ENCODE measurements at regions of chr1 and their contacts with region 1.

Region 1: GRCh38 chr1:64675718-64676345 is 69.0 kb upstream of the RAVER2 start:
- DNase-seq: no peak
- H3K4me3 Mint-ChIP-seq: no peak overlapping the region
- H3K27ac Mint-ChIP-seq: no peak overlapping the region
- H3K4me1 Mint-ChIP-seq: no peaks in the 10 kb centered on the region
- H3K27me3 Mint-ChIP-seq: peaks cover 2% of the 10 kb centered on the region

Region 2: DNA sequence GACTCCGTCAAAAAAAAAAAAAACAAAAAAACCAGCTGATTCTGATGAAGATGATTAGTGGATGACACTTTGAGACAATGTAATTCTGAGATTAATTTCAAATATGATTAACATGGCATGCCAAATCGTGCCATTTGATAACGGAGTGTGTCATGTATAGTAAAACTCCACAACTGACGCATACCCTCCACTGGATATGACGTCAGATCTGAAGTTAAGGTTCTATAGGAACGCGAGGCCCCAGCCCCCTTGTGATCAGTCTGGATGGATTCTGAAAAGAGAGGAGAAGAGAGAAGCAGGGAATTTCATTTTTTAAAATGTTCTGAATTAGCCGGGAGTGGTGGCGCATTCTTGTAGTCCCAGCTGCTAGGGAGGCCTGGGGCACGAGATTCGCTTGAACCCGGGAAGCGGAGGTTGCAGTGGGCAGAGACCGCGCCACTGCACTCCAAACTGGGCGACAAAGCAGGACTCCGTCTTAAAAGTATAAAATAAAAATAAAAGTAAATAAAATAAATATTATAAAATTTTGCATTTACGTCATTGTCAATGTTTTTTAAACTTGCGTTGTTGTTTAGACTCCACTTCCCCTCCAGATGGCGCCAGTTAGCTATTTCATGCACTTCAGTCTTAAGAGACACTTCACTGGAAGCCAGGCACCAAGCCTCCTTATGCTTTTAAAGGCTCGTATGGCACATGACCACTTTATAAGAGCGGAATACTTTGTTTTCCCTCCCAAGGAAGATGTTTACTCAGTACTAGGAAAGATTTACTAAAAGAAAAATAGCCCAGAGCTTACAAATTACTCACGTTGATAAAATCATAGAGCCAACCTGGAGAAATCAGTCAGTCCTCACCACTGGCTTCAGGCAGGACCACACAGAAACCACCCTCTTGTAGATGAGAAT is 406.9 kb before region 1 on chr1:
- CTCF ChIA-PET with region 1: interaction called, 21 read pairs
- POLR2A ChIA-PET with region 1: no interaction called
- DNase-seq: peak; percentile 59
- H3K4me3 Mint-ChIP-seq: no peak overlapping the region
- H3K27ac Mint-ChIP-seq: no peak overlapping the region
- H3K4me1 Mint-ChIP-seq: no peaks in the 10 kb centered on the region
- H3K27me3 Mint-ChIP-seq: peaks cover 9% of the 10 kb centered on the region

Region 3: GRCh38 chr1:64663668-64664067 is 12.2 kb before region 1 on chr1:
- CTCF ChIA-PET with region 1: interaction called, 24 read pairs
- POLR2A ChIA-PET with region 1: no interaction called
- DNase-seq: peak; percentile 23
- H3K4me3 Mint-ChIP-seq: no peak overlapping the region
- H3K27ac Mint-ChIP-seq: no peak overlapping the region
- H3K4me1 Mint-ChIP-seq: no peaks in the 10 kb centered on the region
- H3K27me3 Mint-ChIP-seq: peaks cover 2% of the 10 kb centered on the region